Endothelial cell of umbilical vein (primary cell): ENCODE measurements at regions of chr13 and their contacts with region 1.

Region 1: DNA sequence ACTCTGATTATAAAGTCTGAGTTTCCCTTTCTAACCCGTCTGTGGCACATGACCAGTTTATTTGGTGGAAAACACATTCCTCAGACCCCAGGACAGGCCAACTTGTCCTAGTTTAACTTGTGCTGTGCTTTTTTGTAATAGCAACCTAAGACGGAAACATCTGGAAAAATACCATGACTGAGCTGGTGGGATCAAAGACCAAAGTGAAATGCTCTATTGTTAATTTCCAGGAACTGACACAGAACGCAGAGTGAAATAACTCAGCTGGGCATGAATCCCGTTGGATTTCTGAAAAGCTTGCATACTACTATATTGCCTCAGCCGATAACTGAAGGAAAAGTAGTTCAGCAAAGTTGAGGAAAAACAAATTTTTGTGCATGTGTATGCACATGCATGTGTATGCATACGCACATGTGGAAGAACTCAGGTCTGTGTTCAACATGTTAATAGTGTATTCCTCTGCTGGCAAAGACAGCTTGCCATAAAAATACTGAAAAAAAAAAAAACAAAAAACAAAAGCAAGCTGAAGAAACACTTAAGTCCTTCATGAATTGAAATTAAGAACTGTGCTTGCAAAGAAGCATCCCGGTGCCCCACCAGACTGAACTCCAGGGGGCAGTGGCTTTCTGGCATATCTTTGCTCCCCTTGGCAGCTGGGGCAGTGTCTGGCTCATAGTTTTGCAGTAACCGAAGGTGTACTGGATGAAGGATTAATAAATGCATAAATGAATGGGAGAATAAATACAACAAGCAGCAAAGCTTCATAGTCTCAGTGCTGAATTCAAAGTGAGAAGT is 187.8 kb downstream of the LHFPL6 start:
- DNase-seq: peak; percentile 97
- H3K4me3 ChIP-seq: peak overlapping the region in 1 of 3 experiments; percentile 23
- H3K27ac ChIP-seq: peak overlapping the region; percentile 77
- H3K4me1 ChIP-seq: peaks cover 33% of the 10 kb centered on the region
- H3K27me3 ChIP-seq: no peaks in the 10 kb centered on the region
- CTCF ChIP-seq: peak; percentile 40 to 57
- POLR2A ChIP-seq: no peak

Region 2: GRCh38 chr13:38933777-38934176 is 481.4 kb before region 1 on chr13:
- CTCF ChIA-PET with region 1: no interaction called
- POLR2A ChIA-PET with region 1: no interaction called
- dilution Hi-C with region 1: no loop called
- intact Hi-C with region 1: no loop called
- DNase-seq: no peak
- H3K4me3 ChIP-seq: no peak overlapping the region
- H3K27ac ChIP-seq: no peak overlapping the region
- H3K4me1 ChIP-seq: no peaks in the 10 kb centered on the region
- H3K27me3 ChIP-seq: no peaks in the 10 kb centered on the region
- CTCF ChIP-seq: no peak
- POLR2A ChIP-seq: no peak

Region 3: GRCh38 chr13:39037880-39038568 is 377.2 kb before region 1 on chr13 and contains the starts of genes NHLRC3 and PROSER1:
- CTCF ChIA-PET with region 1: no interaction called
- POLR2A ChIA-PET with region 1: no interaction called
- dilution Hi-C with region 1: no loop called
- intact Hi-C with region 1: loop called (anchors 10 kb)
- DNase-seq: peak; percentile 89
- H3K4me3 ChIP-seq: peak within 1 kb of the TSS; percentile 75 to 98 (median 94)
- H3K27ac ChIP-seq: peak within 1 kb of the TSS; percentile 86
- H3K4me1 ChIP-seq: peaks cover 24% of the 10 kb centered on the region
- H3K27me3 ChIP-seq: no peaks in the 10 kb centered on the region
- CTCF ChIP-seq: no peak
- POLR2A ChIP-seq: peak; percentile 45
- total RNA-seq, gene NHLRC3: 10.2 and 11.9 TPM in 2 replicates
- total RNA-seq, gene PROSER1: 40.4 and 44.1 TPM in 2 replicates

Region 4: GRCh38 chr13:39144941-39145533 is 270.2 kb before region 1 on chr13:
- CTCF ChIA-PET with region 1: no interaction called
- POLR2A ChIA-PET with region 1: no interaction called
- dilution Hi-C with region 1: no loop called
- intact Hi-C with region 1: loop called (anchors 10 kb)
- DNase-seq: peak; percentile 65
- H3K4me3 ChIP-seq: no peak overlapping the region
- H3K27ac ChIP-seq: no peak overlapping the region
- H3K4me1 ChIP-seq: no peaks in the 10 kb centered on the region
- H3K27me3 ChIP-seq: peaks cover 13 to 24% of the 10 kb centered on the region in 2 experiments
- CTCF ChIP-seq: peak; percentile 63 to 79
- POLR2A ChIP-seq: no peak

Region 5: DNA sequence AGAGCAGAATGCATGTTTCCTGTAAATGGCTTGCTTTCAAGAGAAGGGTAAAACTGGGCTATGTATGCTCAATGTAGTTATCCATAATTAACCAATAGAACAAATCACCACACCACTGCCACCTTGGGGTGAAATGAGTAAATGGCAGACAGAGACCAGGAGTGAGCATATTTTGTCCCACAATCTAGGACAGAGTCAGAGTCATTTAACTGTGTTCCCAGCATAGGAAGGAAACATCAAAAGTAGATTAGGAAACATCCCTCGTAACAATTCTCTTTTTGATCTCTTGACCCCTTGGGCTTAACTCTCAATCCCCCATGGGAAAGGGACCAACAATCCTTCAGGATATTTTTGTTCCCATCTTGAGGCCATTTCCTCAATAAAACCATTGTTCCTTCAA is 152.2 kb before region 1 on chr13:
- CTCF ChIA-PET with region 1: no interaction called
- POLR2A ChIA-PET with region 1: no interaction called
- dilution Hi-C with region 1: no loop called
- intact Hi-C with region 1: loop called (anchors 10 kb)
- DNase-seq: peak; percentile 71
- H3K4me3 ChIP-seq: no peak overlapping the region
- H3K27ac ChIP-seq: no peak overlapping the region
- H3K4me1 ChIP-seq: no peaks in the 10 kb centered on the region
- H3K27me3 ChIP-seq: peaks cover 2 to 11% of the 10 kb centered on the region in 2 experiments
- CTCF ChIP-seq: peak; percentile 48
- POLR2A ChIP-seq: no peak

Region 6: DNA sequence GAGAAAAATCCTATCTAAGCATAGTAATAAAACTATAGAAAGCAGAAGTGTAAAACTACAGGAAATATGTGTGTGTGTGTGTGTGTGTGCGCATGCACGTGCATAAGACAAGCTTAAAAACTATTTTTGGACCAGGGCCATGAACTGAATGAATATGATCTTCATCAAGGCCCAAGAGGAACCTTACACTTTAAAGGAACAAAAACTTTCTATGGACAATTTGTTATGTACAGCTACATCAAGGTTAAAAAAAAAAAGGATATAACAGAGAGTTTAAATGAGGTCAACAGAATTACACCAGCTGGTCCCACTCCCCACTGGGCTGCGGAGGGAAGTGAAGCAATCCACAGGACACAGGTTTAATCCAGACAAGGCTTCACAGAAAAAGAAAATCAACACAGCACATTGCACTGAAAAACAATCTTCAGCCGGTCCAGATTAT is 36.7 kb after region 1 on chr13:
- CTCF ChIA-PET with region 1: interaction called, 3 read pairs
- POLR2A ChIA-PET with region 1: no interaction called
- dilution Hi-C with region 1: no loop called
- intact Hi-C with region 1: loop called (anchors 1 kb)
- DNase-seq: peak; percentile 86
- H3K4me3 ChIP-seq: no peak overlapping the region
- H3K27ac ChIP-seq: no peak overlapping the region
- H3K4me1 ChIP-seq: peaks cover 13% of the 10 kb centered on the region
- H3K27me3 ChIP-seq: no peaks in the 10 kb centered on the region
- CTCF ChIP-seq: no peak
- POLR2A ChIP-seq: no peak